Naive thymus-derived CD4-positive, alpha-beta T cell (primary cell): ENCODE measurements at regions of chr13 and their contacts with region 1.

Region 1: GRCh38 chr13:37539976-37540605 is 58.5 kb downstream of the POSTN start:
- DNase-seq: no peak
- ATAC-seq: no peak
- H3K4me3 ChIP-seq: no peak overlapping the region
- H3K4me3 Mint-ChIP-seq: no peak overlapping the region
- H3K27ac ChIP-seq: no peak overlapping the region
- H3K27ac Mint-ChIP-seq: no peak overlapping the region
- H3K4me1 ChIP-seq: no peaks in the 10 kb centered on the region
- H3K4me1 Mint-ChIP-seq: no peaks in the 10 kb centered on the region
- H3K27me3 ChIP-seq: no peaks in the 10 kb centered on the region
- H3K27me3 Mint-ChIP-seq: no peaks in the 10 kb centered on the region

Region 2: DNA sequence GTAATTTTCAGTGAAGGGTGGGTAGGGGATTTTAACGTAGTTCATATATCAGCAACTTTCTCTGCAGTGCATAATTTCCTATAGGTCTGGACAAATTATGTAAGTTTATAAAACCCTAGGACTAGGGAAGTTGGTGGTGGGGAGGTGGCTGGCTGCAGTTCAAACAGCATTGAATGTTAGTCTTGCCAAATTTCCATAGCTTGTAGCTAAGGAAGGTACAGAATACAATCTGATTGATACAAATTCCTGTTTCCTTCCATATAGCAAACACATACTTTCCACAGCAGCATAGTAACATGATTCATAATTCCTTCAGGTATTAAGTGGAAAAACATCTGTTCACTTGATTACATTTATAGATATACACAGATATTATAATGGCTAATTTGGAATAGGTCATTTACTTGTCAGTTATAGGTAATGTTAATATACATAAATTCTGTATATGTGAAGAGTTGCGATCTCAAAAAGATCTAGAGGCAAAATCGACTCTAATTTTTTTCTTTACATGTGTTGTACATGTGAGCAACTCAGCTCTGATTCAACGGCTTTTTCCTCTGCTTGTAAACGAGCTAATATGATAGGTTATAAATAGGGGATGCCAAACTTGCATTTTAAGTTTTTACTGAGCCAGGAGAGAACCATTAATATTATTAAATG is 201.2 kb before region 1 on chr13:
- CTCF ChIA-PET with region 1: no interaction called
- POLR2A ChIA-PET with region 1: no interaction called
- intact Hi-C with region 1: loop called in 1 of 2 experiments (anchors 5 kb)
- DNase-seq: no peak
- ATAC-seq: no peak
- H3K4me3 ChIP-seq: no peak overlapping the region
- H3K4me3 Mint-ChIP-seq: no peak overlapping the region
- H3K27ac ChIP-seq: no peak overlapping the region
- H3K27ac Mint-ChIP-seq: no peak overlapping the region
- H3K4me1 ChIP-seq: no peaks in the 10 kb centered on the region
- H3K4me1 Mint-ChIP-seq: no peaks in the 10 kb centered on the region
- H3K27me3 ChIP-seq: no peaks in the 10 kb centered on the region
- H3K27me3 Mint-ChIP-seq: no peaks in the 10 kb centered on the region